A549 (cell line): ENCODE measurements at regions of chr10 and their contacts with region 1.

Region 1: DNA sequence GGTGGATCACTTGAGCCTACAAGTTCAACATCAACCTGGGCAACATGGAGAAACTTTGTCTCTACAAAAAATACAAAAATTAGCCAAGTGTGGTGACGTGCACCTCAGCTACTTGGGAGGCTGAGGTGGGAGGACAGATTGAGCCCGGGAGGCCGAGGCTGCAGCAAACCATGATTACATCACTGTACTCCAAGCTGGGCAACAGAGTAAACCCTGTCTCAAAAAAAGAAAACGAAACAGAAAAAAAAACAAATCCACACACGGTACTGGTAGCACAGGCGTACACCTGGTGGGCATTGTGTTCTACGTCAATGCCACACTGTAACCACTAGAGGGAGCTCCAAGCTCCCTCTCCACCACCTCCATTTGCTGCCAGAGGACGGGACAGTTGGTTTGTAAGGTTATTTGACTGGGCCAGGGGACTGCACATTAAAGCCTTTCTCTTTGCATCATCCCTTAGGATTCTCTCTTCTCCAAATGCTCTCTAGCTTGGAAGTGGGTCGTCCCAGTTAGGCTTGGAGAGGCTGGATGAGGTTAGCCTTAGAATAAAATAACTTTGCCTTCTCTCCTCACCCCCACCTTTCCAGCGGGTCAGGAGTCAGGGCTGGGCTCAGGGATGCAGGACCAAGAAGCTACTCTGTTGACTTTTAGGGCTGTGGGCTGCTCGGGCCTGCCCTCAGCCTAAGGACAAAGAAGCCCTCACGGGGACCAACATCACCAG is 130.8 kb downstream of the SORBS1 start:
- DNase-seq: peak; percentile 58 to 70
- ATAC-seq: peak; percentile 88 to 97; a peak in 5 of 6 replicates
- H3K4me3 ChIP-seq: no peak overlapping the region
- H3K27ac ChIP-seq: no peak overlapping the region
- H3K4me1 ChIP-seq: no peaks in the 10 kb centered on the region
- CTCF ChIP-seq: peak; percentile 96
- EP300 ChIP-seq: no peak
- POLR2A ChIP-seq: no peak
- RAD21 ChIP-seq: peak; percentile 90 to 94

Region 2: DNA sequence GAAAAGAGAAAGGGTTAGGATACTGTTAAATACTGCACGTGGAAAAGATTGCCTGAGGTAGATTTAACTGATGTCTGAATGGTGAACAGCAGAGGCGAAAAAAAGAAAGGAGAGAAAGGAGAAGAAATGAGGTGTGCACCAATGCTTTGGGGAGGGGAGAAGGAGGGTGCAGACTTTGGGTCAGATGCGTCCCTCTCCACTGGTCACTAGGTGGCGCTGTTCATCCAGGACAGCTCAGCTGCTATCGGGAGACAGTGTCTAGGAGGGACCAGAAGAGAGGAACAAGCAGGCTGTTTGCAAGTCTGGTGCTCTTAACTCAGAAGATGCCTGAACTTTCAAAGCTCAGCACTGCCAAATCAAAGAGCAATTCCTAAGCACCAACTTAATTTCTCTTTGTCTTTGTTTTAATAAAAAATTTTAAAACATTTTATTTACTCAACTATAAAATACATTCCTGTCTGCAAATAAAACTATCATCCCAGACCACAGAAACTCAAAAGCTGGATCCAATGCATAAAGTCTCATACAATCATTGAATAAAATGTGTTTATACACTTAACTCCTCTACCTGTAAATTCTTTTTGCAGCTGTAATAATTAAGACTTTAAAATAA is 55.7 kb before region 1 on chr10:
- CTCF ChIA-PET with region 1: interaction called, 34 read pairs
- POLR2A ChIA-PET with region 1: no interaction called
- DNase-seq: peak; percentile 77 to 84
- ATAC-seq: peak; percentile 97 to 99
- H3K4me3 ChIP-seq: no peak overlapping the region
- H3K27ac ChIP-seq: no peak overlapping the region
- H3K4me1 ChIP-seq: no peaks in the 10 kb centered on the region
- CTCF ChIP-seq: peak; percentile 91
- EP300 ChIP-seq: no peak
- POLR2A ChIP-seq: no peak
- RAD21 ChIP-seq: peak; percentile 85 to 94

Region 3: DNA sequence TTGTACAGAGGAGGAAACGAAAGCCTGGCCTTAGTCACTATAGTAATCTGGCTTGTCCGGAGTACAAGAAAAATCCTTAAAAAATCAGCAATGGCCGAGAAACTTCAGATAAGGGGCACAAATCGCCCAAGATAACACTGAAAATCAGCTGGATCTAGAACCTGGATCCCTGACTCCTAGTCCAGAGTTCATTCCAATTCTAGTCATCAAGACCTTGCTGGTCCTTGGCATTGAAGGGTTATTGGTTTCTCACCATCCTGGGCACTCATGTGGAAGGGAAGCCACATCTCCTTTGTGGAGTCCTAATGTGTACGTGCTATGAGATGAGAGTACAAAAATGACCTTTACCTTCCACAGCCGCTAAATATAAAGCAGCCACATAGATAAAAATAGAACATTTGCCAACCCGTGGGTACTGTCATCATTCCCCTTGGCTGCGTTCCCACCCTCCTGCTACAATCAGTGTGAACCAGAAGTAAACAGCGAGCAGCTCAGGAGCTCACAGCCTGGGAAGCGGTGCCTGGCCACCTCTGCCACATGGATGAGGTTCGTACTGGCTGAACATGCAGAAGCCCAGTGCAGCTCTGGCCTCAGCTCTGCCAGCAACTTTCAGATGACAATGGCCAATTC is 23.6 kb before region 1 on chr10:
- CTCF ChIA-PET with region 1: interaction called, 33 read pairs
- POLR2A ChIA-PET with region 1: no interaction called
- DNase-seq: peak in 1 of 2 experiments; percentile 10
- ATAC-seq: peak in 1 of 2 experiments; percentile 44; a peak in 2 of 6 replicates
- H3K4me3 ChIP-seq: no peak overlapping the region
- H3K27ac ChIP-seq: no peak overlapping the region
- H3K4me1 ChIP-seq: peaks cover 10% of the 10 kb centered on the region; the same call in 2 of the 3 replicates
- CTCF ChIP-seq: no peak
- EP300 ChIP-seq: no peak
- POLR2A ChIP-seq: no peak
- RAD21 ChIP-seq: no peak

Region 4: DNA sequence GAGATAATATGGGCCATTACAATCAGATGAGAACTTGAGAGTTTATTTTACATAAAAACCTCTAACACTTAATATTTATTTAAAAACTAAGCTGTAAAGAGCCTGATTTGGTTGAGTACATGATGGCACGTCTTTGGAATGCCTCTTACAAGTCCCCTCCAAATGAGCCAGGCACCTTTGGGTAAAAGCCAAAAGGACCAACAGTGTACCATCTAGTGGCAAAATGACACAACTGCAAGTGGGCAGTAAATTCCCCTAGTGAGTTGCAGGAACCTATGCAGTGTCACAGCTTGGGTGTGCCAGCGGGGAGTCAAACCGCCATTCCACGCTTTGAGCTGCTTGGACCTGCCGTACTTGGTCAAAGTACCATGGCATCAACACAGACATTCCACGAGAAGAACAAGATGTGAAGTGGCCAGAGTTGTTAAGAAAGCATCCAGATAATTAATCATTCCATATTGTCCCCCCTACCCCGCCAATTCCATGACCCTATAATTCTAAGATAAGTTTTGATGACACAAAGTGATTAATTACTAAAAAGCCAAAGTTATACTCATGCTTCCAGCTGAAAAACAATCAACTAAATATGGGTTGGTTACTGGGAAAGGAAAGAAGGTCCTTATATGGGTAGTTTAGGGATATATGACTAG is 15.6 kb after region 1 on chr10:
- CTCF ChIA-PET with region 1: interaction called, 201 read pairs
- POLR2A ChIA-PET with region 1: no interaction called
- DNase-seq: peak; percentile 81 to 92
- ATAC-seq: peak; percentile 84 to 91
- H3K4me3 ChIP-seq: no peak overlapping the region
- H3K27ac ChIP-seq: peak overlapping the region; percentile 42 to 43; a peak in 4 of 6 replicates
- H3K4me1 ChIP-seq: peaks cover 17% of the 10 kb centered on the region
- CTCF ChIP-seq: peak; percentile 75
- EP300 ChIP-seq: no peak
- POLR2A ChIP-seq: no peak
- RAD21 ChIP-seq: peak; percentile 49 to 52; a peak in 4 of 5 replicates

Region 5: GRCh38 chr10:95472304-95473088 is 42.1 kb after region 1 on chr10:
- CTCF ChIA-PET with region 1: interaction called, 13 read pairs
- POLR2A ChIA-PET with region 1: no interaction called
- DNase-seq: no peak
- ATAC-seq: no peak
- H3K4me3 ChIP-seq: no peak overlapping the region
- H3K27ac ChIP-seq: no peak overlapping the region
- H3K4me1 ChIP-seq: no peaks in the 10 kb centered on the region
- CTCF ChIP-seq: no peak
- EP300 ChIP-seq: no peak
- POLR2A ChIP-seq: no peak
- RAD21 ChIP-seq: no peak

Region 6: GRCh38 chr10:95579835-95580535 is 149.6 kb after region 1 on chr10:
- CTCF ChIA-PET with region 1: interaction called, 24 read pairs
- POLR2A ChIA-PET with region 1: no interaction called
- DNase-seq: no peak
- ATAC-seq: no peak
- H3K4me3 ChIP-seq: no peak overlapping the region
- H3K27ac ChIP-seq: no peak overlapping the region
- H3K4me1 ChIP-seq: no peaks in the 10 kb centered on the region
- CTCF ChIP-seq: no peak
- EP300 ChIP-seq: no peak
- POLR2A ChIP-seq: no peak
- RAD21 ChIP-seq: no peak

Region 7: DNA sequence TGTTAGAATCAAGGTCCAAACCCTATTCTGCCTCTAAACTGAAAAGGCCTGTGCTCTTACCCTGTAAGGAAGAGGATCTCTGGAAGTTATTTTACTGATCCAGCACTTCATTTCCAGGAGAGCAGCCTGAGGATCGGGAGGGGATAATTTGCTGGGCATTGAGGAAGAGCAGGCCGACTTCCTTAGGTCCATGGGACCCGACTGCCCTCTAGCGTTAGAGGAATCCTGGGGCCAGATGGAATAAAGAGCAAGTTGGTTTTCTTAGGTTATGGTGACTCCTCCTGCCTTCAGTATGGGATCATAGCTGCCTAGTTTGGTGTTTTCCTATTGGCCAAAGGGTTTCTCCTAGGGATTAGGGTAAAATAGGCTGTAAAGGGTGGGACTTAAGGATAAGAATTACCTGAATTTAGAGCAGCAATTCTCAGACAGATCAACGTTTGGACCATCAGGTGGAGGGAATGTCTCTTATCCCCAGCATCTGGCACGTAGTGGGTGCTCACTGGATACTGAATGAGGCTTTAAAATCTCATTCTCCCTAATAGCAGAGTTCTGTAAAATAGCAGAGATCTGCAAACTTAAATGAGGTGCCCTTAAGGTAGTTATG is 170.8 kb after region 1 on chr10:
- CTCF ChIA-PET with region 1: interaction called, 254 read pairs
- POLR2A ChIA-PET with region 1: no interaction called
- DNase-seq: peak; percentile 76 to 87
- ATAC-seq: peak; percentile 96 to 98
- H3K4me3 ChIP-seq: no peak overlapping the region
- H3K27ac ChIP-seq: no peak overlapping the region
- H3K4me1 ChIP-seq: no peaks in the 10 kb centered on the region
- CTCF ChIP-seq: peak; percentile 97
- EP300 ChIP-seq: no peak
- POLR2A ChIP-seq: no peak
- RAD21 ChIP-seq: peak; percentile 97 to 98